ENCODE measurements at regions of chr9 and their contacts with region 1.

Region 1: DNA sequence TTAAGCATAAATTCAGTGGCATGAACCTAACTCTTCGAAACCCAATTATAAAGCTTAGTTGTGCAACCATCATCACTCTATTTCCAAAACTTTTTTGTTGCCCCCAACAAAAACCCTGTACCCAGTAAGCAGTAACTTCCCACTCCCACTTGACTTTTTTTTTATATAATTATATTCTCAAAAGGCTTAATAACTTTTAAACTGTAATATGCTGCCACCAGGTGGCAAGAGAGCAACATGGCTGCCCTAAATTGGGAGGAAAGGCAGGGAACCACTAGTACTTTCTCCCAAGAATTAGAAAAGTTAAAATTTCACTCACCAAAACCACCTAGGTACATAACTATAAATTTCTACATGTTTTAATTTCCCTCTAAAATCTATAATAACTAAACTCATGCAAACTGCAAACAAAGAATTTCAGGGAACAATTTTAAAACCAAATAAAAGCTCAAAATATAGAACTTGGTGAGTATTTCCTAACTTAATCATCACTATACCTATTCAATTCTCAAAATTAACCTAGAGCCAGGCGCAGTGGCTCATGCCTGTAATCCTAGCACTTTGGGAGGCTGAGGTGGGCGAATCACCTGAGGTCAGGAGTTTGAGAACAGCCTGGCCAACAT is 50.2 kb upstream of the RNF38 start:
- DNase-seq: no peak
- ATAC-seq: peak; percentile 34; the same call in 1 of the 3 replicates
- H3K4me3 ChIP-seq: no peak overlapping the region
- H3K27ac ChIP-seq: no peak overlapping the region
- H3K4me1 ChIP-seq: no peaks in the 10 kb centered on the region
- H3K27me3 ChIP-seq: no peaks in the 10 kb centered on the region
- CTCF ChIP-seq: peak; percentile 57 to 64 (median 59)
- EP300 ChIP-seq: no peak
- POLR2A ChIP-seq: no peak
- RAD21 ChIP-seq: peak; percentile 83

Region 2: DNA sequence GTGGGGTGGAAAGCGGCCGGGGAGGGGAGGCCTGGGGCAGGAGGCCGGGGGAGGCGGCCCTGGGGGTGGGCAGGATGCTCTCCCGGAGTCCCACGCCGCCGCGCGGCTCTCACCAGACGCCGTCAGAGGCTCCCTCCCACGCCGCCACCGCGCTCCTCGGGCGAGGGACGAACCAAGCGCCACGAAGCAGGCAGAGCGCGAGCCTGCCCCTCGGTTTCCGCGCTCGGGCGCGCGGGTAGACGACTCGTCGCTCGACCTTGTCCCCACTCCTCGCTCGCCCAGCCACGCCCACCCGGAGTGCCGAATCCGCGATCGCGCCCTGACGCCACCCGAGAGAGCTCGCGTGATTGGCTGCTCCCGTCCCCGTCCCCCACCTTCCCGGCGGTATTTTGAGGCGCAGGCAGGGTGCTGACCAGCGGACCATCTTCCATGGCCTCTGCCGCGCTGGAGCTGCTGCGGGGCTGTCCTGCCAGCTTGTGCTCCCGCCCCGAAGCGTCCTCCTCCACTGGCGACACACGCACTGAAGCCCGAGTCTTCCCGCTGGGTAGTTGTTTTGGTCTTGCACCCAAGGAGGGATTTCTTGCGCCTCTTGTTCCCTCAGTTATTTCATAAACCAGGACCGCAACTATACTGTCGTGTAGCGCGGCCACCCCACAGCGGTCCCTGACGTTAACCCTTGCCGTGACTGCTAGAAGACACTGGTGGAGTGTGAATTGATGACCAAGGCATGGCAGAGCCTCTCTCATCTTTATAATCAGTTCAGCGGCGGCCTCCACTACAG is 191.8 kb before region 1 on chr9 and contains the start of gene GNE:
- CTCF ChIA-PET with region 1: interaction called, 7 read pairs
- POLR2A ChIA-PET with region 1: no interaction called
- RAD21 ChIA-PET with region 1: no interaction called
- SMC1A ChIA-PET with region 1: no interaction called
- in situ Hi-C with region 1: no loop called
- intact Hi-C with region 1: loop called (anchors 10 kb)
- DNase-seq: peak; percentile 78
- ATAC-seq: peak; percentile 93
- H3K4me3 ChIP-seq: peak within 1 kb of the TSS; percentile 76
- H3K27ac ChIP-seq: peak within 1 kb of the TSS; percentile 78
- H3K4me1 ChIP-seq: peaks cover 3% of the 10 kb centered on the region
- H3K27me3 ChIP-seq: no peaks in the 10 kb centered on the region
- CTCF ChIP-seq: 0 out of 6 replicates have a peak, but pooled peaks of 1 of the 3 experiments have one; percentile 0
- EP300 ChIP-seq: 0 out of 4 replicates have a peak, but pooled peaks of 1 of the 2 experiments have one; percentile 22
- POLR2A ChIP-seq: peak; percentile 96
- RAD21 ChIP-seq: no peak
- polyA plus RNA-seq, gene GNE: 4.1 to 6.0 TPM

Region 3: GRCh38 chr9:36436909-36437308 is 13.3 kb before region 1 on chr9:
- CTCF ChIA-PET with region 1: interaction called, 26 read pairs
- POLR2A ChIA-PET with region 1: interaction called, 7 read pairs
- RAD21 ChIA-PET with region 1: interaction called, 4 read pairs
- SMC1A ChIA-PET with region 1: interaction called, 9 read pairs
- in situ Hi-C with region 1: no loop called
- intact Hi-C with region 1: no loop called
- DNase-seq: no peak
- ATAC-seq: no peak
- H3K4me3 ChIP-seq: no peak overlapping the region
- H3K27ac ChIP-seq: no peak overlapping the region
- H3K4me1 ChIP-seq: no peaks in the 10 kb centered on the region
- H3K27me3 ChIP-seq: no peaks in the 10 kb centered on the region
- CTCF ChIP-seq: no peak
- EP300 ChIP-seq: no peak
- POLR2A ChIP-seq: no peak
- RAD21 ChIP-seq: no peak

Region 4: DNA sequence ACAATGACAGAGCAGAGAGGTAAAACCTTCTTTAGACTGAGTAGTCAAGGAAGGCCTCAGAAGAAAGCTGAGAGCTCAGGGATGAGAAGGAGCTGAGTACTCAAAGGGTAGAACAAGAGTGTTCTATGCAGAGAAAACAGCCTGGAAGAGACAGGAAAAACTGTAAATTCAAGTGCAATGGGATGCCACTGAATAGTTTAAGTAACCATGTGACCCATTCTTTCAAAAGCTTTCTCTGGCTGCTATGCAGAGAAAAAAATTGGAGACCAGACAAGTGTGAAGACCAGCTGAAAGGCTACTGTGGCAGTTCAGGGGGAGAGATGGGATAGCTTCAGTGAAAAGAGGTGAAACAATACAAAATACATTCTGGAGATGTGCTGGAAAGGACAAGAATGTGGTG is 11.1 kb after region 1 on chr9:
- CTCF ChIA-PET with region 1: interaction called, 11 read pairs
- POLR2A ChIA-PET with region 1: no interaction called
- RAD21 ChIA-PET with region 1: interaction called, 3 read pairs
- SMC1A ChIA-PET with region 1: interaction called, 7 read pairs
- in situ Hi-C with region 1: no loop called
- intact Hi-C with region 1: no loop called
- DNase-seq: no peak
- ATAC-seq: no peak
- H3K4me3 ChIP-seq: no peak overlapping the region
- H3K27ac ChIP-seq: no peak overlapping the region
- H3K4me1 ChIP-seq: peaks cover 14% of the 10 kb centered on the region
- H3K27me3 ChIP-seq: no peaks in the 10 kb centered on the region
- CTCF ChIP-seq: no peak
- EP300 ChIP-seq: no peak
- POLR2A ChIP-seq: no peak
- RAD21 ChIP-seq: no peak

Region 5: DNA sequence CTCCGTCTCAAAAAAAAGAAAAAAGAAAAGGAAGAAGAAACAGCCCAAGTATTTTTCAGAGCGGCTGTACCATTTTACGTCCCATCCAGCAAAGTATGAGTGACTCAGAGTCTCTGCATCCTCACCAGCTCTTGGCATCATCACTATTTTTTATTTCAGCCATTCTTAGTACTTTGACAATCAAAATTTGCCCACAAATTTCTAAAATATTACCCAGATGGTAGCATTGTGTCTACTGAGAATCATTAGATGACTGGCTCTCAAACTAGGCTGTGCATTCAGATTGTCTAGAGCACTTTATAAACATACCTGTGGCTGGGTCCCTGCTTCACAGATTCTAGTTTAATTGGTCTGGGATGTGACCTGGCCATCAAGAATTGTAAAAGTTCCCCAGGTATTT is 100.9 kb after region 1 on chr9:
- CTCF ChIA-PET with region 1: interaction called, 62 read pairs
- POLR2A ChIA-PET with region 1: interaction called, 3 read pairs
- RAD21 ChIA-PET with region 1: interaction called, 14 read pairs
- SMC1A ChIA-PET with region 1: interaction called, 19 read pairs
- in situ Hi-C with region 1: no loop called
- intact Hi-C with region 1: loop called (anchors 2 kb)
- DNase-seq: no peak
- ATAC-seq: peak; percentile 19
- H3K4me3 ChIP-seq: no peak overlapping the region
- H3K27ac ChIP-seq: peak overlapping the region; percentile 73
- H3K4me1 ChIP-seq: peaks cover 17% of the 10 kb centered on the region
- H3K27me3 ChIP-seq: no peaks in the 10 kb centered on the region
- CTCF ChIP-seq: no peak
- EP300 ChIP-seq: no peak
- POLR2A ChIP-seq: no peak
- RAD21 ChIP-seq: no peak

Region 6: DNA sequence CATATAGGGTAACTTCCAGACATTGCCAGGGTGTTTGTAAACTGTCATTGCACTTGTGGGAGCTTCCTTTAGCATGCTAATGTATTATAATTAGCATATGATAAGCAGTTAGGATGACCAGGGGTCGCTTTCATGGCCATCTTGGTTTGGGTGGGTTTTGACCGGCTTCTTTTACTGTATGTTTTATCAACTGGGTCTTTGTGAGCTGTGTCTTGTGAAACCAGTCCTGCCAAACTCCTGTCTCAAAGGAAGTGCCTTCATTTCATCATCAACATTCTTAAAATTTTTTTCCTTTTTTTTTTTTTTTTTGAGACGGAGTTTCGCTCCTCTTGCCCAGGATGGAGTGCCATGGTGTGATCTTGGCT is 110.6 kb after region 1 on chr9:
- CTCF ChIA-PET with region 1: interaction called, 62 read pairs
- POLR2A ChIA-PET with region 1: no interaction called
- RAD21 ChIA-PET with region 1: interaction called, 4 read pairs
- SMC1A ChIA-PET with region 1: interaction called, 8 read pairs
- in situ Hi-C with region 1: no loop called
- intact Hi-C with region 1: loop called (anchors 2 kb)
- DNase-seq: no peak
- ATAC-seq: no peak
- H3K4me3 ChIP-seq: no peak overlapping the region
- H3K27ac ChIP-seq: no peak overlapping the region
- H3K4me1 ChIP-seq: no peaks in the 10 kb centered on the region
- H3K27me3 ChIP-seq: no peaks in the 10 kb centered on the region
- CTCF ChIP-seq: no peak
- EP300 ChIP-seq: no peak
- POLR2A ChIP-seq: no peak
- RAD21 ChIP-seq: no peak

Region 7: GRCh38 chr9:36609306-36609705 is 159.1 kb after region 1 on chr9:
- CTCF ChIA-PET with region 1: no interaction called
- POLR2A ChIA-PET with region 1: no interaction called
- RAD21 ChIA-PET with region 1: no interaction called
- SMC1A ChIA-PET with region 1: no interaction called
- in situ Hi-C with region 1: no loop called
- intact Hi-C with region 1: no loop called
- DNase-seq: no peak
- ATAC-seq: no peak
- H3K4me3 ChIP-seq: no peak overlapping the region
- H3K27ac ChIP-seq: no peak overlapping the region
- H3K4me1 ChIP-seq: no peaks in the 10 kb centered on the region
- H3K27me3 ChIP-seq: no peaks in the 10 kb centered on the region
- CTCF ChIP-seq: no peak
- EP300 ChIP-seq: no peak
- POLR2A ChIP-seq: no peak
- RAD21 ChIP-seq: no peak

Region 8: GRCh38 chr9:36728651-36729520 is 278.7 kb after region 1 on chr9:
- CTCF ChIA-PET with region 1: interaction called, 10 read pairs
- POLR2A ChIA-PET with region 1: no interaction called
- RAD21 ChIA-PET with region 1: interaction called, 3 read pairs
- SMC1A ChIA-PET with region 1: no interaction called
- in situ Hi-C with region 1: no loop called
- intact Hi-C with region 1: no loop called
- DNase-seq: peak; percentile 13
- ATAC-seq: peak; percentile 86
- H3K4me3 ChIP-seq: no peak overlapping the region
- H3K27ac ChIP-seq: no peak overlapping the region
- H3K4me1 ChIP-seq: peaks cover 6% of the 10 kb centered on the region
- H3K27me3 ChIP-seq: no peaks in the 10 kb centered on the region
- CTCF ChIP-seq: peak; percentile 85 to 95 (median 94); a peak in 5 of 6 replicates
- EP300 ChIP-seq: no peak
- POLR2A ChIP-seq: no peak
- RAD21 ChIP-seq: peak; percentile 92

Measured in GM12878 (cell line).